Ovary (tissue), 10 donors: ENCODE measurements at regions of chrX and their contacts with region 1.

Region 1: DNA sequence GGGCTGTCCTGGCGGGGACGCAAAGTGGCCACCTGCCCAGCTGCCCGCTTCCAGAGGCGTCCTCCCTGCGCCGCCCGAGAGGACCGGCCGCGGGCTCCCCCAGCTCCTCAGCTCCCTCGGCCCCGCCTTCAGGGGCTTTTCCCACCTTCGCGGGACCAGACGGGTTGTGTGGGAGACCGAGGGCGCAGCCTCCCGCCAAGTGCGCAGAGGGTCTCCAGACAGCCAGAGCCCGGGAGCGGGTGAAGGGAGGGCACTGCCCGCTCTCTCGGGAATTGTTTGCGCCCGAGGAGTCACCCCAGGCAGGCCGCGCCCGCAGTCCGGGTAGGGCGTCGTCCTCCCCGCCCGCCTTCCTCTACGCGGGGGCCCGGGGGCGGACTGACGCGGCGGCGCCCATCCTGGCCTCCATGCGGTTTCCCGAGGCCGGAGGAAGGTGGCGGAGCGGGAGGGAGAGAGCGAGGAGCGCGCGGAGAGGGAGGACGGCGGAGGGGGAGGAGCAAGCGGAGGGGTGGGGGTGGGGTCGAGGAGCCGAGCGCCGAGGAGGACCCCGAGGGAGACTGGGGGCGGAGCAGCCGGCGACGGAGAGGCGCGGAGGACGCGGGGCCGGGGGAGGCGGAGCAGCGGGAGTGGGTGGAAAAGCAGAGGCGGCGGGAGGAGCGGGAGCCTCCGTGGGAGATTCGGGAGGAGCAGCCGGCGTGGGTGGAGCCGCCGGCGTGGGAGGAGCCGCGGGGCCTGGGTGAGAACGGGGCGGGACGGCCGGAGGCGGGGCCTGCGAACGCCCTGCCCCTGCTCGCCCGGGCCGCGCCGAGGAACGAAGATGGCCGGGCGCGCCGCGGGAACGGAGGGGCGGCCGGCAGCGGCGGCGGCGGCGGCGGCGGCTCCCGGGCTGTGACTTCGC is 47.6 kb downstream of the CLDN34 start:
- DNase-seq: peak; percentile 88 to 91 (median 90)
- H3K4me3 ChIP-seq: peak overlapping the region; percentile 54
- H3K27ac ChIP-seq: peak overlapping the region; percentile 85 to 92
- H3K4me1 ChIP-seq: no peaks in the 10 kb centered on the region
- H3K27me3 ChIP-seq: no peaks in the 10 kb centered on the region
- CTCF ChIP-seq: peak in 1 of 3 donors; percentile 6
- EP300 ChIP-seq: no peak
- POLR2A ChIP-seq: peak; percentile 62

Region 2: GRCh38 chrX:9923357-9923756 is 91.4 kb before region 1 on chrX:
- intact Hi-C with region 1: no loop called
- DNase-seq: no peak
- H3K4me3 ChIP-seq: no peak overlapping the region
- H3K27ac ChIP-seq: no peak overlapping the region
- H3K4me1 ChIP-seq: peaks cover 2% of the 10 kb centered on the region
- H3K27me3 ChIP-seq: no peaks in the 10 kb centered on the region
- CTCF ChIP-seq: no peak
- EP300 ChIP-seq: no peak
- POLR2A ChIP-seq: no peak

Region 3: DNA sequence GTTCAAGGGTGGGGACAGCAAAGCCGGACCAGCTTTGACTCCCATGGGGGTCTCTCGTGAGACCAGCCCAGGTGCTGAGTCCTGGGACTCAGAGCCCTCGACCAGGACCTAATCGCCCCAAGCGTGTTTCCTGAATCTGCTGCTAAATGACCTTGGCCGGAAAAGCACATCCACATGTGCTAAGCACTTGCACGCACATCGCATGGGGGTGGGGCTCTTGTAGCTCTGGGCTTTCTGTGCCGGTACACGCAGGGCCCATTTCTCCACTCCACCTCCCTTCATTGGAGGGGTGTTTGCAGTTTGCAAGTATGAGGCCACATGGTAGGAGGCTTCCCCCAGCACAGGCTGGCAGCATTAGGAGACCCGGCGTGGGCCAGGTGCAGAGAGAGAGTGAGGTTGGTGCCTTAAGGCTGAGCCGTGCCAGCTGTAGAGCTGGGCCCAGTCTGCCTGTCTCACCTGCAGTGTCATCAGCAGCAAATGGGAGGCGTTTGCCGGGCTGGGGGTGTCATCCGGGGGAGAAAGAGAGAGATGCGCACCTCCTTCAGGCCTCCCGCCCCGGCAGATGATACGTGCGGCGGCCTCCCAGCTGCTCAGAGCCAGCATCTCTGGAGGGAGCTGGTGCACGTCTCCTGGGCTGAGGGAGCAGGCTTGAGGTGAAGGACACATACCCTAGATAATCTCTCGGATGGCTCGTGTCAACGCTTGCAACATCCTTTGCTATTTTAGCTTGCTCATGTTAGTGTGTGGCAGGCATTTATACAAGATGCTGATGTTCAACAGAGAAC is 96.8 kb after region 1 on chrX:
- intact Hi-C with region 1: loop called (anchors 5 kb)
- DNase-seq: peak; percentile 65 to 77 (median 75)
- H3K4me3 ChIP-seq: no peak overlapping the region
- H3K27ac ChIP-seq: peak overlapping the region; percentile 31 to 86
- H3K4me1 ChIP-seq: peaks cover 20% of the 10 kb centered on the region
- H3K27me3 ChIP-seq: no peaks in the 10 kb centered on the region
- CTCF ChIP-seq: no peak
- EP300 ChIP-seq: no peak
- POLR2A ChIP-seq: no peak